ENCODE measurements at regions of chr5 and their contacts with region 1.

Region 1: GRCh38 chr5:74648835-74649293 is 8.3 kb upstream of the ENC1 start:
- DNase-seq: peak; percentile 52
- H3K4me3 Mint-ChIP-seq: no peak overlapping the region
- H3K27ac Mint-ChIP-seq: no peak overlapping the region
- H3K4me1 Mint-ChIP-seq: peaks cover 40% of the 10 kb centered on the region
- H3K27me3 Mint-ChIP-seq: no peaks in the 10 kb centered on the region
- CTCF ChIP-seq: peak; percentile 82

Region 2: GRCh38 chr5:73902327-73903051 is 746.4 kb before region 1 on chr5:
- CTCF ChIA-PET with region 1: no interaction called
- intact Hi-C with region 1: loop called (anchors 1 kb)
- DNase-seq: peak; percentile 19
- H3K4me3 Mint-ChIP-seq: no peak overlapping the region
- H3K27ac Mint-ChIP-seq: no peak overlapping the region
- H3K4me1 Mint-ChIP-seq: peaks cover 26% of the 10 kb centered on the region
- H3K27me3 Mint-ChIP-seq: no peaks in the 10 kb centered on the region
- CTCF ChIP-seq: peak; percentile 79

Region 3: GRCh38 chr5:73985145-73985544 is 663.7 kb before region 1 on chr5:
- CTCF ChIA-PET with region 1: interaction called, 3 read pairs
- intact Hi-C with region 1: loop called (anchors 2 kb)
- DNase-seq: peak; percentile 39
- H3K4me3 Mint-ChIP-seq: no peak overlapping the region
- H3K27ac Mint-ChIP-seq: no peak overlapping the region
- H3K4me1 Mint-ChIP-seq: no peaks in the 10 kb centered on the region
- H3K27me3 Mint-ChIP-seq: peaks cover 8% of the 10 kb centered on the region
- CTCF ChIP-seq: peak; percentile 46

Region 4: GRCh38 chr5:74035521-74035981 is 613.3 kb before region 1 on chr5:
- CTCF ChIA-PET with region 1: interaction called, 7 read pairs
- intact Hi-C with region 1: loop called (anchors 2 kb)
- DNase-seq: peak; percentile 49
- H3K4me3 Mint-ChIP-seq: no peak overlapping the region
- H3K27ac Mint-ChIP-seq: no peak overlapping the region
- H3K4me1 Mint-ChIP-seq: peaks cover 15% of the 10 kb centered on the region
- H3K27me3 Mint-ChIP-seq: no peaks in the 10 kb centered on the region
- CTCF ChIP-seq: peak; percentile 40

Region 5: GRCh38 chr5:74766849-74767578 is 118.2 kb after region 1 on chr5 and contains the starts of genes GFM2 and NSA2:
- CTCF ChIA-PET with region 1: no interaction called
- intact Hi-C with region 1: no loop called
- DNase-seq: peak; percentile 94
- H3K4me3 Mint-ChIP-seq: peak within 1 kb of the TSS; percentile 99
- H3K27ac Mint-ChIP-seq: peak within 1 kb of the TSS; percentile 98
- H3K4me1 Mint-ChIP-seq: peaks cover 19% of the 10 kb centered on the region
- H3K27me3 Mint-ChIP-seq: no peaks in the 10 kb centered on the region
- CTCF ChIP-seq: no peak
- total RNA-seq, gene GFM2: 51.2 and 57.1 TPM in 2 replicates
- total RNA-seq, gene NSA2: 171 and 203 TPM in 2 replicates

Measured in Calu3 (cell line).